ENCODE measurements at regions of chr15 and their contacts with region 1.

Region 1: GRCh38 chr15:25433118-25433865 is 5.5 kb downstream of the UBE3A start:
- DNase-seq: no peak
- ATAC-seq: no peak
- H3K4me3 ChIP-seq: no peak overlapping the region
- H3K27ac ChIP-seq: peak overlapping the region in 1 of 10 donors; percentile 3
- H3K4me1 ChIP-seq: peaks cover 3 to 90% (median 61%) of the 10 kb centered on the region in 9 donors
- H3K27me3 ChIP-seq: no peaks in the 10 kb centered on the region
- CTCF ChIP-seq: no peak

Region 2: GRCh38 chr15:25397100-25397499 is 36.2 kb before region 1 on chr15:
- intact Hi-C with region 1: loop called in 1 of 10 experiments (anchors 5 kb)
- DNase-seq: no peak
- ATAC-seq: no peak
- H3K4me3 ChIP-seq: no peak overlapping the region
- H3K27ac ChIP-seq: no peak overlapping the region
- H3K4me1 ChIP-seq: peaks cover 0 to 64% (median 20%) of the 10 kb centered on the region in 9 donors
- H3K27me3 ChIP-seq: no peaks in the 10 kb centered on the region
- CTCF ChIP-seq: no peak

Measured in heart right ventricle (tissue), 16 donors.